Activated CD8-positive, alpha-beta T cell treated with anti-CD3 and anti-CD28 coated beads for 36 hours (primary cell): ENCODE measurements at regions of chr1 and their contacts with region 1.

Region 1: GRCh38 chr1:21270086-21270689 is 20.1 kb downstream of the ECE1 start:
- DNase-seq: peak; percentile 90
- ATAC-seq: peak; percentile 95
- H3K4me3 Mint-ChIP-seq: no peak overlapping the region
- H3K27ac Mint-ChIP-seq: peak overlapping the region; percentile 63
- H3K4me1 Mint-ChIP-seq: peaks cover 30% of the 10 kb centered on the region
- H3K27me3 Mint-ChIP-seq: no peaks in the 10 kb centered on the region
- CTCF ChIP-seq: peak; percentile 98

Region 2: GRCh38 chr1:21244986-21245687 is 25.1 kb before region 1 on chr1:
- CTCF ChIA-PET with region 1: interaction called, 32 read pairs
- POLR2A ChIA-PET with region 1: no interaction called
- intact Hi-C with region 1: no loop called
- DNase-seq: no peak
- ATAC-seq: no peak
- H3K4me3 Mint-ChIP-seq: no peak overlapping the region
- H3K27ac Mint-ChIP-seq: no peak overlapping the region
- H3K4me1 Mint-ChIP-seq: peaks cover 2% of the 10 kb centered on the region
- H3K27me3 Mint-ChIP-seq: no peaks in the 10 kb centered on the region
- CTCF ChIP-seq: peak; percentile 43

Region 3: GRCh38 chr1:21294266-21294989 is 24.2 kb after region 1 on chr1:
- CTCF ChIA-PET with region 1: interaction called, 62 read pairs
- POLR2A ChIA-PET with region 1: interaction called, 4 read pairs
- intact Hi-C with region 1: no loop called
- DNase-seq: peak; percentile 95
- ATAC-seq: peak; percentile 66
- H3K4me3 Mint-ChIP-seq: peak overlapping the region; percentile 63
- H3K27ac Mint-ChIP-seq: peak overlapping the region; percentile 95
- H3K4me1 Mint-ChIP-seq: peaks cover 85% of the 10 kb centered on the region
- H3K27me3 Mint-ChIP-seq: no peaks in the 10 kb centered on the region
- CTCF ChIP-seq: no peak

Region 4: DNA sequence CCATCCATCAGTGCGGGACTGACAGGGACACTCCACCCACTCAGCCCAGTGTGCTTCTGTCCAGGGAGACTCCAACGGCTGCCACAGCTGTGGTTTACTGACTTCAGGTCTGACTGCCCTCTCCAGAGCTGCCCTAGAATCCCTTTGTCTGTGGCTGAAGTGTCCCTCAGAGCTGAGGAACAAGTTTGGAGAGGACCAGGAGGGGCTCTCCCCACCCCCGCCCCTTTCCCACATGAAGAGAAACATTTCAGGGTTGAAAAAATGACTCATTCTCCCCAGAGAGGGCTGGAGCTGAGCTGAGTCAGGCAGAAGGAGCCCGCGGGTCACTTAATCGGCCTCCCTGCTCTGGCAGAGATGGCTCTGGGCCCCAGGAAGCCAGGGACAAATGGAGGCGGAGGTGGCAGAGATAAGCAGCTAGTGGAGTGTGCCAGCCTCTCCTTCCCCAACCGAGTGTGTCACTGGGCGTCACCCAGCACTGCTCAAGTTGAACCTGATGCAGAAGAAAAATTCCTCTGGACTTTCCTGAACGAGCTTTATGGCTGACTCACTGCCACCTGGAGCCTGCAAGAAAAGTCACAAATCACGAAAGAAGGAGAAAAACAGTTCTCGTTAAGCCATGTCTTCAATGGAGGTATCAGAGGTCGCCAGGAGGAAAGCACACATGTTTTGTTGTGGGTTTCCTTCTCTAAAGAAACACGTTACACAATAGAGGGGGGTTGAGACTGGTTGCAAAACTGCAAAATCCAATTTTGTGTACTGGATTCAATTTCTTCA is 54.4 kb after region 1 on chr1:
- CTCF ChIA-PET with region 1: interaction called, 23 read pairs
- POLR2A ChIA-PET with region 1: interaction called, 8 read pairs
- intact Hi-C with region 1: no loop called
- DNase-seq: peak; percentile 91
- ATAC-seq: peak; percentile 86
- H3K4me3 Mint-ChIP-seq: peak overlapping the region; percentile 56
- H3K27ac Mint-ChIP-seq: peak overlapping the region; percentile 94
- H3K4me1 Mint-ChIP-seq: peaks cover 84% of the 10 kb centered on the region
- H3K27me3 Mint-ChIP-seq: no peaks in the 10 kb centered on the region
- CTCF ChIP-seq: no peak

Region 5: GRCh38 chr1:21344750-21345443 is 74.7 kb after region 1 on chr1:
- CTCF ChIA-PET with region 1: interaction called, 27 read pairs
- POLR2A ChIA-PET with region 1: no interaction called
- intact Hi-C with region 1: no loop called
- DNase-seq: peak; percentile 35
- ATAC-seq: peak; percentile 11
- H3K4me3 Mint-ChIP-seq: peak overlapping the region; percentile 82
- H3K27ac Mint-ChIP-seq: peak overlapping the region; percentile 95
- H3K4me1 Mint-ChIP-seq: peaks cover 38% of the 10 kb centered on the region
- H3K27me3 Mint-ChIP-seq: no peaks in the 10 kb centered on the region
- CTCF ChIP-seq: no peak

Region 6: GRCh38 chr1:21414015-21414414 is 143.8 kb after region 1 on chr1:
- CTCF ChIA-PET with region 1: no interaction called
- POLR2A ChIA-PET with region 1: no interaction called
- intact Hi-C with region 1: no loop called
- DNase-seq: no peak
- ATAC-seq: no peak
- H3K4me3 Mint-ChIP-seq: no peak overlapping the region
- H3K27ac Mint-ChIP-seq: no peak overlapping the region
- H3K4me1 Mint-ChIP-seq: no peaks in the 10 kb centered on the region
- H3K27me3 Mint-ChIP-seq: peaks cover 12% of the 10 kb centered on the region
- CTCF ChIP-seq: no peak